Cardiac septum (tissue), 1 donor: ENCODE measurements at regions of chr16 and their contacts with region 1.

Region 1: GRCh38 chr16:2739625-2740435 is 12.6 kb upstream of the SRRM2 start:
- DNase-seq: no peak

Region 2: DNA sequence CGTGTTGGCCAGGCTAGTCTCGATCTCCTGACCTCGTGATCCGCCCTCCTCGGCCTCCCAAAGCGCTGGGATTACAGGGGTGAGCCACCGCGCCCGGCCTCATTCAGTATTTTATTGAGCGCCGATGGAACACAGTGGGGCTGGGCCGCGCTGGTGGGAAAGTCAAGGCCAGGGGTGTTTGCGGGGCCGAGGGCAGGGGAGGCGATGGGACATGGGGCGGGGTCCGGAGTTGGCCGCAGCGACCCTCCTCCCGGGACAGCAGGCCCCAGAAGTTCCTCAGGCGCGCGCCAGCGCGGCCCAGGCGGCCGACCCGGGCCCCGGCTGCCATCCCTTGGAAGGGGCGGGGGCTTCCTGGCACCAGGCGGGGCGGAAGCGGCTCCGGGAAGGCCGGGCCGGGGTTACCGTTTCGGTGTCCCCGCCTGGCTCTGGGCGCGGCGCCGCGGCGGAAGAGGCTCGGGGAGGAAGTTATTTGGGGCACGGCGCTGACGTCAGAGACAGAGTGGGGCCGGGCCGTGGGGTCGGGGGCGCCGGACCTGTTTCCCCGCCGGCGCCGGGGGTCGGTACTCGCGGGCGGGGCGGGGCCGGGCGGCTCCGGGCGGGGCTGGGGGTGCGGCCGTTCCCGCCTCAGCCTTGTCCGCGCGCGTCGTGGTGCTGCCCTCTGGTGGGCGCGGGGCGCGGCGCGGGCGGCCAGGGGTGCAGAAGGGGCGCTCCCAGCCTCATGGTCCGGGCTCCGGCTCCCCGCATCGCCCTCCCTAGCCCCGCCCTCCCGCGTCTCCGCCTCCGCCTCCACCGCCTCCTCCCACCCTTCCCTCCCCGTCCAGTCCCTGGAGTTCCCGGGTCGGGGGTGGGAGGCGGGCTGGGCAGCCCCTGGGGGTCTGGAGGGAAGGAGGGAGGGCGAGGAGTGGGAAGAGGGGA is 18.9 kb before region 1 on chr16:
- intact Hi-C with region 1: no loop called
- DNase-seq: peak; percentile 87

Region 3: GRCh38 chr16:2784951-2785635 is 45.3 kb after region 1 on chr16:
- intact Hi-C with region 1: loop called (anchors 10 kb)
- DNase-seq: peak; percentile 61